ENCODE measurements at regions of chr13 and their contacts with region 1.

Region 1: GRCh38 chr13:47598340-47598911 is 402.6 kb downstream of the SUCLA2 start:
- DNase-seq: no peak
- ATAC-seq: no peak
- H3K4me3 ChIP-seq: no peak overlapping the region
- H3K27ac ChIP-seq: no peak overlapping the region
- H3K4me1 ChIP-seq: no peaks in the 10 kb centered on the region
- H3K27me3 ChIP-seq: no peaks in the 10 kb centered on the region
- CTCF ChIP-seq: no peak
- EP300 ChIP-seq: no peak
- POLR2A ChIP-seq: no peak
- RAD21 ChIP-seq: no peak

Region 2: DNA sequence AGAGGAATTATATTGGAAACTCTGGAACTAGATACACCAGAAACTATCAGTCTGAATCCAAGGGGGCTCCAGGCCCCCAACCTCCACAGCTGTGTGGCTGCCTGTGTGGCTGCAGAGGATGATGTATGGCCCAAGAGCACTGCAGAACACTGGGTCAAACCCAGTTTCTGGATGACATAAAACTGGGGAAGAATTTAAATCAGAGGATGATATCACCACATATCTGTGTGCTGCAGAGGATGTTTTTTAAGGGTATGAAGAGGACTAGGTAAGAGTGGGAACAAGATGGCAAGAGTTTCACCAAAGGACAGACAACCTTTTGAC is 176.2 kb after region 1 on chr13:
- CTCF ChIA-PET with region 1: no interaction called
- POLR2A ChIA-PET with region 1: no interaction called
- in situ Hi-C with region 1: no loop called
- intact Hi-C with region 1: loop called (anchors 10 kb)
- DNase-seq: no peak
- ATAC-seq: peak; percentile 33; the same call in 2 of the 3 replicates
- H3K4me3 ChIP-seq: no peak overlapping the region
- H3K27ac ChIP-seq: no peak overlapping the region
- H3K4me1 ChIP-seq: no peaks in the 10 kb centered on the region
- H3K27me3 ChIP-seq: no peaks in the 10 kb centered on the region
- CTCF ChIP-seq: no peak
- EP300 ChIP-seq: no peak
- POLR2A ChIP-seq: no peak
- RAD21 ChIP-seq: no peak

Measured in HepG2 (cell line).